Caco-2 (cell line): ENCODE measurements at regions of chr13 and their contacts with region 1.

Region 1: GRCh38 chr13:113393563-113394338 is 29.8 kb upstream of the GRTP1 start:
- DNase-seq: peak; percentile 80 to 93
- H3K4me3 ChIP-seq: peak overlapping the region; percentile 73
- H3K4me3 Mint-ChIP-seq: peak overlapping the region; percentile 82
- H3K27ac Mint-ChIP-seq: peak overlapping the region; percentile 29
- H3K4me1 ChIP-seq: peaks cover 32% of the 10 kb centered on the region
- H3K4me1 Mint-ChIP-seq: peaks cover 6% of the 10 kb centered on the region
- H3K27me3 ChIP-seq: no peaks in the 10 kb centered on the region
- H3K27me3 Mint-ChIP-seq: no peaks in the 10 kb centered on the region
- CTCF ChIP-seq: peak; percentile 61 to 92

Region 2: GRCh38 chr13:113029487-113030258 is 364.1 kb before region 1 on chr13:
- CTCF ChIA-PET with region 1: no interaction called
- POLR2A ChIA-PET with region 1: no interaction called
- intact Hi-C with region 1: loop called (anchors 10 kb)
- DNase-seq: peak; percentile 74 to 87
- H3K4me3 ChIP-seq: no peak overlapping the region
- H3K4me3 Mint-ChIP-seq: no peak overlapping the region
- H3K27ac Mint-ChIP-seq: no peak overlapping the region
- H3K4me1 ChIP-seq: no peaks in the 10 kb centered on the region
- H3K4me1 Mint-ChIP-seq: peaks cover 11% of the 10 kb centered on the region
- H3K27me3 ChIP-seq: no peaks in the 10 kb centered on the region
- H3K27me3 Mint-ChIP-seq: no peaks in the 10 kb centered on the region
- CTCF ChIP-seq: peak; percentile 95 to 97

Region 3: DNA sequence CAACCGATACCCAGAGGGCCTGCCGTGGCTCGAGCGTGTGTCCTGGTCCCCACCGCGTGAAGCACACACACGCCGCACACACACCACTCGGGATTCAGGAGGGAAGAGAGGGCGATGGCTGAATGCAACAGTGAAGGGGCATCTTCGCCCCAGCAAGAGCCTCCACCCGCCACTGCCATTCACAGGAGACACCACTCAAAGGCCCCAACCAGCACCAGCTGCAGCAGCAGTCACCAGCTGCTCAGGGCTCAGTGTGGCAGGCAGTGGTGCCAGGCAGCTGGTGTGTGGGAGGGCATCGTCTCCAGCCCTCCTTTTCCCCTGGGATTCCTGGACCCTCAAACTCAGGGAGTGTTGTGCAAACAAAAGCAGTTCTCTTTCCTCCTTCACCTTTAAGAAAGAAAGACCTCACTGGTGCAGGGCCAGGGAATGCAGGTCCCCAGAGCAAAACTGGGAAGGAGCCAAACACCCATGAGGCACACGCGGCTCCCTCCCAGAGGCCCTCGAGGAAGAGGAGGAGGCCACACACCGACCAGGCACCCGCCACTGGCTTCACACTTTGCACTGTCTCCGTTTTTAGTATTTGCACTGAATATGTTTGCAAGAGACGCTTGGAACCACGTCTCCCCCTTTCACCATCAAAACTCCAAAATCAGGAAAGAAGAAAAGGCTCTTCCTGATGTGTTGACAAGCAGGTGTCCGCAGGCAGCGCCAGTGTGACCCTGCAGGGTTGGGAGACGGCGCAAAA is 314.7 kb before region 1 on chr13:
- CTCF ChIA-PET with region 1: no interaction called
- POLR2A ChIA-PET with region 1: no interaction called
- intact Hi-C with region 1: no loop called
- DNase-seq: no peak
- H3K4me3 ChIP-seq: no peak overlapping the region
- H3K4me3 Mint-ChIP-seq: no peak overlapping the region
- H3K27ac Mint-ChIP-seq: no peak overlapping the region
- H3K4me1 ChIP-seq: 0 out of 2 replicates have a peak, but pooled peaks cover 6% of the 10 kb centered on the region
- H3K4me1 Mint-ChIP-seq: no peaks in the 10 kb centered on the region
- H3K27me3 ChIP-seq: no peaks in the 10 kb centered on the region
- H3K27me3 Mint-ChIP-seq: no peaks in the 10 kb centered on the region
- CTCF ChIP-seq: no peak

Region 4: GRCh38 chr13:113129921-113130750 is 263.6 kb before region 1 on chr13:
- CTCF ChIA-PET with region 1: no interaction called
- POLR2A ChIA-PET with region 1: no interaction called
- intact Hi-C with region 1: no loop called
- DNase-seq: no peak
- H3K4me3 ChIP-seq: no peak overlapping the region
- H3K4me3 Mint-ChIP-seq: no peak overlapping the region
- H3K27ac Mint-ChIP-seq: no peak overlapping the region
- H3K4me1 ChIP-seq: no peaks in the 10 kb centered on the region; the same call in 1 of the 2 replicates
- H3K4me1 Mint-ChIP-seq: no peaks in the 10 kb centered on the region
- H3K27me3 ChIP-seq: no peaks in the 10 kb centered on the region
- H3K27me3 Mint-ChIP-seq: no peaks in the 10 kb centered on the region
- CTCF ChIP-seq: no peak

Region 5: DNA sequence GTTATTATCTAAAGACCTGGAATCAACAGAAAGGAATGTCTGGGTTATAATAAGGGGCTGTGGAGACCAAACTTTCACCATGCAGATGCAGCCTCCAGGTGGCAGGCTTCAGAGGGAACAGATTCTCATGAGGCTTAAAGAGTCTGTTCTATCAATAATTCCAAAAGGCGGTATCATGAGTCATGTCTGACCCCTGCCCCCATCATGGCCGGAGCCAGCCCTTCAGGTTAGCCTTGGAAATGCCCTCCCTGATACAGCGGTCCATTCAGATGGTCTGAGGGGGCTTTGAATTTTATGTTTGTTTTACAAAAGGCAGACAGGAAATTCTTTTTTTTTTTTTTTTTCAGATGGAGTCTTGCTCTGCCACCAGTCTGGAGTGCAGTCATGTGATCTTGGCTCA is 118.4 kb before region 1 on chr13:
- CTCF ChIA-PET with region 1: interaction called, 8 read pairs
- POLR2A ChIA-PET with region 1: no interaction called
- intact Hi-C with region 1: loop called (anchors 1 kb)
- DNase-seq: peak; percentile 77 to 78
- H3K4me3 ChIP-seq: no peak overlapping the region
- H3K4me3 Mint-ChIP-seq: no peak overlapping the region
- H3K27ac Mint-ChIP-seq: peak overlapping the region; percentile 10
- H3K4me1 ChIP-seq: peaks cover 17% of the 10 kb centered on the region
- H3K4me1 Mint-ChIP-seq: peaks cover 18% of the 10 kb centered on the region
- H3K27me3 ChIP-seq: no peaks in the 10 kb centered on the region
- H3K27me3 Mint-ChIP-seq: no peaks in the 10 kb centered on the region
- CTCF ChIP-seq: peak; percentile 53 to 83

Region 6: GRCh38 chr13:113327766-113328471 is 65.8 kb before region 1 on chr13:
- CTCF ChIA-PET with region 1: no interaction called
- POLR2A ChIA-PET with region 1: interaction called, 8 read pairs
- intact Hi-C with region 1: loop called (anchors 2 kb)
- DNase-seq: no peak
- H3K4me3 ChIP-seq: no peak overlapping the region
- H3K4me3 Mint-ChIP-seq: no peak overlapping the region
- H3K27ac Mint-ChIP-seq: no peak overlapping the region
- H3K4me1 ChIP-seq: peaks cover 3% of the 10 kb centered on the region; the same call in 1 of the 2 replicates
- H3K4me1 Mint-ChIP-seq: peaks cover 5% of the 10 kb centered on the region
- H3K27me3 ChIP-seq: no peaks in the 10 kb centered on the region
- H3K27me3 Mint-ChIP-seq: no peaks in the 10 kb centered on the region
- CTCF ChIP-seq: no peak

Region 7: DNA sequence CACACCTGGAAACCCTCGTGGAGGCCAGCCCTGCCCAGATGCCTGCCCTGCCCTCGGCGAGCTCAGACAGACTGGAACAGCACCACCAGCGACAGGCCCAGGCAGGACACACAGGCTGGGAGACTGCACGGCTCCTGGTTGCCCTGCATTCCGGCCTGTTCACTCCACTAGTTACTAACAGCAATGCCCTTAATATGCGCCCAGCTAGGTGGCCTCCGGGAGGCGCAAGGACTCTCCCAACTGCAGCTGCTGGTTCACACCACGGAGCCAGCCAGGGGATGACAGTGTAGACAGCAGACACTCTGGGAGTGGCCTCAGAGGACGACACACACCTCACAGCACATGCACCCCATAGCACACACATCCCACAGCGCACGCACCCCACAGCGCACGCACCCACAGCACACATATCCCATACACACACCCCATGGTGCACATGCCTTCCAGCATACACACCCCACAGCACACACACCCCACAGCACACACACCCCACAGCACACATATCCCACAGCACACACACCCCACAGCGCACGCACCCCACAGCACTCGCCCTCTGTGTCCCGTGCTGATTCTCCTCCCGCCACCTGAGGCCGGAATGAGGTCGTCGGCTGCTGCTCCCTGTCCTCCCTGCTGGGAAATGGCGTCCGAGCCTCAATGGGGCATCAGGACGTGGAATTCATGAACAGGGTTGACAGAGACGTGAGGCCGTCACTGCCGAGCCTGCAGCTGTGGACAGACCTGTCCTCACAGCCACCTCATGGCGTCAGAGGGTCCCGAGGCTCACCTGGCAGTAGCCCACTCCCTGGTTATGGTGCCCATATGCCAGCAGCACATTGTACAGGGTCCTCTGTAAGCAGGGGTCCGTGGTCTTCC is 43.5 kb before region 1 on chr13:
- CTCF ChIA-PET with region 1: interaction called, 3 read pairs
- POLR2A ChIA-PET with region 1: no interaction called
- intact Hi-C with region 1: loop called (anchors 5 kb)
- DNase-seq: peak in 1 of 2 experiments; percentile 44
- H3K4me3 ChIP-seq: no peak overlapping the region
- H3K4me3 Mint-ChIP-seq: no peak overlapping the region
- H3K27ac Mint-ChIP-seq: peak overlapping the region; percentile 36
- H3K4me1 ChIP-seq: no peaks in the 10 kb centered on the region
- H3K4me1 Mint-ChIP-seq: no peaks in the 10 kb centered on the region
- H3K27me3 ChIP-seq: no peaks in the 10 kb centered on the region
- H3K27me3 Mint-ChIP-seq: no peaks in the 10 kb centered on the region
- CTCF ChIP-seq: peak in 1 of 2 experiments; percentile 21

Region 8: GRCh38 chr13:113373811-113374485 is 19.8 kb before region 1 on chr13:
- CTCF ChIA-PET with region 1: interaction called, 3 read pairs
- POLR2A ChIA-PET with region 1: no interaction called
- intact Hi-C with region 1: loop called (anchors 1 kb)
- DNase-seq: no peak
- H3K4me3 ChIP-seq: no peak overlapping the region
- H3K4me3 Mint-ChIP-seq: no peak overlapping the region
- H3K27ac Mint-ChIP-seq: no peak overlapping the region
- H3K4me1 ChIP-seq: no peaks in the 10 kb centered on the region
- H3K4me1 Mint-ChIP-seq: no peaks in the 10 kb centered on the region
- H3K27me3 ChIP-seq: no peaks in the 10 kb centered on the region
- H3K27me3 Mint-ChIP-seq: no peaks in the 10 kb centered on the region
- CTCF ChIP-seq: no peak

Region 9: DNA sequence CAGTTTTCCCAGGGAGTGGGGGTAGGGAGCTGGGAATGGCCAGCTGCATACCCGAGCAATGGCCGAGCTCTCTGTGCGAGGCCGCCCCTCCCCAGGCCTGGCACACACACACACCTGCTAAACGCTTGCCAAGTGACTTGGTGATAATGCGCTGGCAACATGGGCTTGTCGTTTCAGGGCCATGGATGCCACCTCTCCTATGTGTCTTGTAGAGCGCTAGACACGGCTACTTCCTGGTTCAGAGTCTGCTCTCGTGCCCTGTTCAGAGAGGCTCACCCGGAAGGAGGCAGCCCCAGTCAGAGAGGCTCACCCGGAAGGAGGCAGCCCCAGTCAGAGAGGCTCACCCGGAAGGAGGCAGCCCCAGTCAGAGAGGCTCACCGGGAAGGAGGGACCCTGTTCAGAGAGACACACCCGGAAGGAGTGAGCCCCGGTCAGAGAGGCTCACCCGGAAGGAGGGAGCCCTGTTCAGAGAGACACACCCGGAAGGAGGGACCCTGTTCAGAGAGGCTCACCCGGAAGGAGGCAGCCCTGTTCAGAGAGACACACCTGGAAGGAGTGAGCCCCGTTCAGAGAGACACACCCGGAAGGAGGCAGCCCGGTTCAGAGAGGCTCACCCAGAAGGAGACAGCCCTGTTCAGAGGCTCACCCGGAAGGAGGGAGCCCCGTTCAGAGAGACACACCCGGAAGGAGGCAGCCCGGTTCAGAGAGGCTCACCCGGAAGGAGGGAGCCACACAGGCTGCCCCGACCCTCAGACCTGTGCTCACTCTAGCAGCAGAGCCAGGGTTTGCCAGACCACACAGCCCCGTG is 55.3 kb after region 1 on chr13:
- CTCF ChIA-PET with region 1: no interaction called
- POLR2A ChIA-PET with region 1: no interaction called
- intact Hi-C with region 1: loop called (anchors 1 kb)
- DNase-seq: peak; percentile 91 to 96
- H3K4me3 ChIP-seq: peak overlapping the region; percentile 44
- H3K4me3 Mint-ChIP-seq: peak overlapping the region; percentile 84
- H3K27ac Mint-ChIP-seq: peak overlapping the region; percentile 92
- H3K4me1 ChIP-seq: peaks cover 9% of the 10 kb centered on the region
- H3K4me1 Mint-ChIP-seq: peaks cover 6% of the 10 kb centered on the region
- H3K27me3 ChIP-seq: no peaks in the 10 kb centered on the region
- H3K27me3 Mint-ChIP-seq: no peaks in the 10 kb centered on the region
- CTCF ChIP-seq: no peak